Activated CD8-positive, alpha-beta T cell treated with anti-CD3 and anti-CD28 coated beads for 36 hours (primary cell): ENCODE measurements at regions of chr16 and their contacts with region 1.

Region 1: DNA sequence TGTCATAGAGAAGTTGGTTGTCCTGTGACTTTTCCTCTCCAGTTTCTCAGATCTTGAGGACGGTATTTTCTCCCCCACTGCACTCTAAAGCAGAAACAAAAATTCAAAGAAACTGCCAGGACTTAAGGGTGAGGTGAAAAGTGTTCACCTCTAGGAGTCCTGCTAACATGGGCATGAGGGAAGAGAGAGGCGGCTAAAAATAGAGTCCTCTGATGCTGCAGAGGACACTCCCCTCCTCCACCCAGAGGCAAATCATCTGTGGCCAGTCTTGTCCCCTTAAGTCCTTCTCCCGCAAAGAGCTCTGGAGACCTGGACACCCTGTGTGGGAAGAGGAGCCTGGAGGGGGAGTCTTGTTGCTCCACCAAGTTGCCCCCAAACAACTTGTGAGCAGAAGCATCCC is 4.7 kb upstream of the DDX19A start:
- DNase-seq: no peak
- ATAC-seq: no peak
- H3K4me3 Mint-ChIP-seq: no peak overlapping the region
- H3K27ac Mint-ChIP-seq: no peak overlapping the region
- H3K4me1 Mint-ChIP-seq: peaks cover 9% of the 10 kb centered on the region
- H3K27me3 Mint-ChIP-seq: no peaks in the 10 kb centered on the region
- CTCF ChIP-seq: no peak

Region 2: DNA sequence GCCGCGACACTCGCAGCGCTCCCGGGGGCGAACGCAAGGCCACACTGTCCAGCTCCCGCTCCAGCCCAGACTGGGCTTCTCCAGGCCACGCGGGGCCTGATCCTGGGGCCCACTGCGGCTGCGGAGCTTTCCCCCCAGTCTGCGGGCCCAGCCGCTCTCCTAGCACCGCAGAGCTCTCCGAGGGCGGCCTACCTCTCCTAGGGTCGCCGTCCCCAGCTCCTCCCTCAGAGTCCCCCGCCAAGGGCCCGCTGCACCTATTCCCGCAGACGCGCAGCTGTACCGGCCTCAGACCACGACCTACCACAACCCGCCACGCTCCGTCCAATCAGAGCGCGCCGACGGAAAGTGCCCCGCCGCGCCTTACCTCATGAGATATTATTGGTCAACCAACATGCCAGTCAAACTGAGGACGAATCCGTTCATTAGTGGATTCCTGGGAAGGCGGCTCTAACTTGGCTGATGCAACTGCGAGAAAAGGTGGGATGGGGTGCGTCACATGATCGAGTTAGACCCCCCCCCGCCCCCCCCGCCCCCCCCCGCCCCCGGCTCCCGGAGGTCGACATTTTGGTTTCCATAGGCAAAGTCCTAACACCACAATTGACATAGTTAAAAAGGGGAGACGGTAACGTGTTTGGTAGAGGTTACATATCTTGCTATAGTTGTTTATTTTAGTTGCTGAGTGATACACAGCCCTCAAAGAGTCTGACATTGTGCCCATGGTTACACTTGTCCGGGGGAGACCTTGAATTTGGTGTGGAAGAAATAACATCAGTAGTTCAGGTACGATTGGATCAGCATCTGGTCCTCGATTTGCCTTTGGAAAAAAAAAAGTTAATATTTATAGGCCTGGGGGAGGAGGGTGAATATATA is 52.6 kb before region 1 on chr16 and contains the start of gene AARS1:
- CTCF ChIA-PET with region 1: no interaction called
- POLR2A ChIA-PET with region 1: interaction called, 18 read pairs
- intact Hi-C with region 1: loop called (anchors 10 kb)
- DNase-seq: peak; percentile 97
- ATAC-seq: peak; percentile 98
- H3K4me3 Mint-ChIP-seq: peak within 1 kb of the TSS; percentile 99
- H3K27ac Mint-ChIP-seq: peak within 1 kb of the TSS; percentile 100
- H3K4me1 Mint-ChIP-seq: peaks cover 23% of the 10 kb centered on the region
- H3K27me3 Mint-ChIP-seq: no peaks in the 10 kb centered on the region
- CTCF ChIP-seq: no peak
- total RNA-seq, gene AARS1: 160 to 162 TPM

Region 3: DNA sequence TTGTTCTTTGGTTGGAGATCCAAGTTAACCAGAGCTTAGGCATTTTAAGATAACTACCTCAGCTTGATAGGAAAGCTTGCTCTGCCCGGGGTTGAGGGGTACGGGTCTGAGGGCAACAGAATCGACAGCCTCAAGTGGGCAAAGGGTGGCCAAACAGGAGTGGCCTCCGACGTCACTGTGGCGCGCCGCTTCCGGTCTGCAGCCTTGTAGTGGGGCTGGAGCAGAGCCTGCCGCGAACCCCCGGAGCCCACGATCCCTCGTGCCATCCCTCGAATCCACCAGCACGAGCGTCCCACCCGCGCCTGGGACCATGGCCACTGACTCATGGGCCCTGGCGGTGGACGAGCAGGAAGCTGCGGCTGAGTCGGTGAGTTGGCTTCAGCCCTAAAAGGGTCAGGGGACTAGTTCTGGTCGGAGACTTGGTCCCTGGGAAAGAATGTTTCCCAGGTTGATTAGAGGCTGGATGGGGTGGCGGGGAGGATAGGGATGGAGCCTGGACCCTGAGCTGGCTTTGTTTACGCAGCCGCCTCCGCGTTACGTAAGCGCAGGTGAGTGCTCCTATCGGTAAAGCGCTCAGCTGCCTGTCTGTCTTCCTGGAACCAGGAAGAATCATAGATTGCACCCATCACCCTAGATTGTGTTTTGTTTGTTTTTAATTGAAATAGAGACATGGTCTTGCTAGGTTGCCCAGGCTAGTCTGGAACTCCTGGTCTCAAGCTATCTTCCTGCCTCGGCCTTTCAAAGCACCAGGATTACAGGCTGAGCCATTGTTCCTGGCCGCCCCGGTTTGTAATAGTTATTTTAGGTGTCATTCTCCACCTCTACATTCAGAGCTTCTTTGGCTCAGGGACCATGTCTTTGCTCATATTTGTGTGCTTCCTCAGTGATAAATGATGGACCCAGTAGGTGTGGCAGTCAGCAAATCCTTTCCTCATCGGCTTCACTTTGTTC is 42.8 kb before region 1 on chr16 and contains the start of gene DDX19B:
- CTCF ChIA-PET with region 1: no interaction called
- POLR2A ChIA-PET with region 1: interaction called, 32 read pairs
- intact Hi-C with region 1: loop called (anchors 10 kb)
- DNase-seq: peak; percentile 83
- ATAC-seq: peak; percentile 89
- H3K4me3 Mint-ChIP-seq: peak within 1 kb of the TSS; percentile 93
- H3K27ac Mint-ChIP-seq: peak within 1 kb of the TSS; percentile 97
- H3K4me1 Mint-ChIP-seq: peaks cover 37% of the 10 kb centered on the region
- H3K27me3 Mint-ChIP-seq: no peaks in the 10 kb centered on the region
- CTCF ChIP-seq: no peak
- total RNA-seq, gene DDX19B: 34.8 to 42.2 TPM

Region 4: GRCh38 chr16:70364399-70364798 is 22.4 kb after region 1 on chr16:
- CTCF ChIA-PET with region 1: interaction called, 3 read pairs
- POLR2A ChIA-PET with region 1: interaction called, 13 read pairs
- intact Hi-C with region 1: no loop called
- DNase-seq: no peak
- ATAC-seq: no peak
- H3K4me3 Mint-ChIP-seq: no peak overlapping the region
- H3K27ac Mint-ChIP-seq: no peak overlapping the region
- H3K4me1 Mint-ChIP-seq: no peaks in the 10 kb centered on the region
- H3K27me3 Mint-ChIP-seq: no peaks in the 10 kb centered on the region
- CTCF ChIP-seq: no peak

Region 5: GRCh38 chr16:70375636-70376611 is 33.9 kb after region 1 on chr16:
- CTCF ChIA-PET with region 1: interaction called, 3 read pairs
- POLR2A ChIA-PET with region 1: interaction called, 17 read pairs
- intact Hi-C with region 1: no loop called
- DNase-seq: no peak
- ATAC-seq: no peak
- H3K4me3 Mint-ChIP-seq: no peak overlapping the region
- H3K27ac Mint-ChIP-seq: peak overlapping the region; percentile 49
- H3K4me1 Mint-ChIP-seq: peaks cover 11% of the 10 kb centered on the region
- H3K27me3 Mint-ChIP-seq: no peaks in the 10 kb centered on the region
- CTCF ChIP-seq: no peak